CD8-positive, alpha-beta memory T cell (primary cell): ENCODE measurements at regions of chr19 and their contacts with region 1.

Region 1: GRCh38 chr19:48391107-48391986 is at the start of gene KDELR1:
- DNase-seq: peak; percentile 64 to 80 (median 71)
- H3K4me3 ChIP-seq: peak within 1 kb of the TSS; percentile 93
- H3K4me3 Mint-ChIP-seq: peak within 1 kb of the TSS; percentile 91 to 98 (median 92)
- H3K27ac ChIP-seq: peak within 1 kb of the TSS; percentile 88
- H3K27ac Mint-ChIP-seq: peak within 1 kb of the TSS; percentile 82 to 97 (median 94)
- H3K4me1 ChIP-seq: peaks cover 34% of the 10 kb centered on the region
- H3K4me1 Mint-ChIP-seq: peaks cover 26 to 56% (median 32%) of the 10 kb centered on the region in 3 donors
- H3K27me3 ChIP-seq: peaks cover 25% of the 10 kb centered on the region
- H3K27me3 Mint-ChIP-seq: peaks cover 22 to 24% of the 10 kb centered on the region in 2 donors
- total RNA-seq, gene KDELR1: 78.7 to 82.9 TPM

Region 2: DNA sequence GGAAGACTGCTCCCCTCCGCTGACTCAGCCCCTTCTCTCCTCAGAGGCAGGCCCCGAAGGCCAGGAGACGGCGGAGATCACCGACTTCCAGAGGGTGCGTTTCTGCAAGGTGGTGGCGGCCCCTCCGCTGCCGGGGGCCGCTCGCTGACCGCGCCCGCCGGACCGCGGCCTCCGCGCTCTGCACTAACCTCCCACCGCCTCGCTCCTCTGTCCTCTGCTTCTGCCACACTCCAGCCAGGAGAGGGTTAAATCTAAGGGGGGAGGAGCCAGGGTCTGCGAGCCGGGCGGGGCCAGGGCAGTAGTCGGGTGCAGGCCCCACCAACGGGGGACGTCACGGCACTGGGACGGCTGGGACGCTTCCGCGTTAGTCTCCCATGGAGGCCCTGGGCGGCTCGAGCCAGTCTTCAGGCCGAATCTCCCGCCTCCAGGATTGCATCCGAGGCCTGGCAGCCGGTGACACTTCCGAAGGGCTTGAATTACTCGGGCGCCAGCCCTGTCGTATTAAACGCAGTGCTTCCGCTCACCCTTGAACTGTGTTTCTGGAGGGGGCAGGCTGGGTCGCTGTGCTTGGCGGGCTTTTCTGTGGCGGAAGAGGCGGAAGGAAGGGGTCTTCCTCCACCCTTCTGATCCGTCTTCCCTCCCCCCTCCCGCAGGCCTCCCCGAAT is 1117.9 kb before region 1 on chr19:
- CTCF ChIA-PET with region 1: no interaction called
- POLR2A ChIA-PET with region 1: no interaction called
- DNase-seq: peak; percentile 82 to 92 (median 86)
- H3K4me3 ChIP-seq: peak overlapping the region; percentile 93
- H3K4me3 Mint-ChIP-seq: peak overlapping the region; percentile 96 to 99 (median 97)
- H3K27ac ChIP-seq: peak overlapping the region; percentile 97
- H3K27ac Mint-ChIP-seq: peak overlapping the region; percentile 97 to 100 (median 98)
- H3K4me1 ChIP-seq: peaks cover 15% of the 10 kb centered on the region
- H3K4me1 Mint-ChIP-seq: peaks cover 18 to 28% (median 24%) of the 10 kb centered on the region in 3 donors
- H3K27me3 ChIP-seq: no peaks in the 10 kb centered on the region
- H3K27me3 Mint-ChIP-seq: no peaks in the 10 kb centered on the region

Region 3: GRCh38 chr19:48308631-48309586 is 82.4 kb before region 1 on chr19:
- CTCF ChIA-PET with region 1: no interaction called
- POLR2A ChIA-PET with region 1: no interaction called
- DNase-seq: no peak
- H3K4me3 ChIP-seq: no peak overlapping the region
- H3K4me3 Mint-ChIP-seq: no peak overlapping the region
- H3K27ac ChIP-seq: no peak overlapping the region
- H3K27ac Mint-ChIP-seq: no peak overlapping the region
- H3K4me1 ChIP-seq: no peaks in the 10 kb centered on the region
- H3K4me1 Mint-ChIP-seq: no peaks in the 10 kb centered on the region
- H3K27me3 ChIP-seq: no peaks in the 10 kb centered on the region
- H3K27me3 Mint-ChIP-seq: peaks cover 1 to 10% of the 10 kb centered on the region in 2 donors

Region 4: GRCh38 chr19:48333467-48334384 is 57.6 kb before region 1 on chr19:
- CTCF ChIA-PET with region 1: interaction called, 15 read pairs
- POLR2A ChIA-PET with region 1: interaction called, 4 read pairs
- DNase-seq: peak; percentile 89 to 95 (median 91)
- H3K4me3 ChIP-seq: peak overlapping the region; percentile 95
- H3K4me3 Mint-ChIP-seq: peak overlapping the region; percentile 88 to 99 (median 97)
- H3K27ac ChIP-seq: peak overlapping the region; percentile 88
- H3K27ac Mint-ChIP-seq: peak overlapping the region; percentile 93 to 98 (median 96)
- H3K4me1 ChIP-seq: peaks cover 43% of the 10 kb centered on the region
- H3K4me1 Mint-ChIP-seq: peaks cover 43 to 53% (median 49%) of the 10 kb centered on the region in 3 donors
- H3K27me3 ChIP-seq: no peaks in the 10 kb centered on the region
- H3K27me3 Mint-ChIP-seq: no peaks in the 10 kb centered on the region

Region 5: GRCh38 chr19:48363810-48364563 is 27.4 kb before region 1 on chr19 and contains the starts of genes SYNGR4 and TMEM143:
- CTCF ChIA-PET with region 1: interaction called, 21 read pairs
- POLR2A ChIA-PET with region 1: interaction called, 8 read pairs
- DNase-seq: peak; percentile 97 to 100 (median 98)
- H3K4me3 ChIP-seq: peak within 1 kb of the TSS; percentile 99
- H3K4me3 Mint-ChIP-seq: peak within 1 kb of the TSS; percentile 81 to 92 (median 89)
- H3K27ac ChIP-seq: peak within 1 kb of the TSS; percentile 90
- H3K27ac Mint-ChIP-seq: peak within 1 kb of the TSS; percentile 86 to 98 (median 93)
- H3K4me1 ChIP-seq: peaks cover 20% of the 10 kb centered on the region
- H3K4me1 Mint-ChIP-seq: peaks cover 13 to 19% (median 16%) of the 10 kb centered on the region in 3 donors
- H3K27me3 ChIP-seq: no peaks in the 10 kb centered on the region
- H3K27me3 Mint-ChIP-seq: no peaks in the 10 kb centered on the region
- total RNA-seq, gene SYNGR4: not detected
- total RNA-seq, gene TMEM143: 11.4 to 15.8 TPM

Region 6: GRCh38 chr19:48403606-48404005 is 12.3 kb after region 1 on chr19:
- CTCF ChIA-PET with region 1: interaction called, 19 read pairs
- POLR2A ChIA-PET with region 1: no interaction called
- DNase-seq: peak in 4 of 5 donors; percentile 43 to 73 (median 50)
- H3K4me3 ChIP-seq: no peak overlapping the region
- H3K4me3 Mint-ChIP-seq: no peak overlapping the region
- H3K27ac ChIP-seq: no peak overlapping the region
- H3K27ac Mint-ChIP-seq: peak overlapping the region in 6 of 8 donors; percentile 21 to 88 (median 44)
- H3K4me1 ChIP-seq: no peaks in the 10 kb centered on the region
- H3K4me1 Mint-ChIP-seq: peaks cover 15 to 32% (median 18%) of the 10 kb centered on the region in 3 donors
- H3K27me3 ChIP-seq: no peaks in the 10 kb centered on the region
- H3K27me3 Mint-ChIP-seq: peaks cover 11 to 21% of the 10 kb centered on the region in 2 donors

Region 7: GRCh38 chr19:48495396-48495795 is 104.0 kb after region 1 on chr19:
- CTCF ChIA-PET with region 1: no interaction called
- POLR2A ChIA-PET with region 1: no interaction called
- DNase-seq: no peak
- H3K4me3 ChIP-seq: no peak overlapping the region
- H3K4me3 Mint-ChIP-seq: peak overlapping the region in 4 of 7 donors; percentile 36 to 60 (median 52)
- H3K27ac ChIP-seq: no peak overlapping the region
- H3K27ac Mint-ChIP-seq: peak overlapping the region in 3 of 8 donors; percentile 3 to 76 (median 57)
- H3K4me1 ChIP-seq: peaks cover 28% of the 10 kb centered on the region
- H3K4me1 Mint-ChIP-seq: peaks cover 19 to 35% (median 34%) of the 10 kb centered on the region in 3 donors
- H3K27me3 ChIP-seq: peaks cover 3% of the 10 kb centered on the region
- H3K27me3 Mint-ChIP-seq: peaks cover 35 to 37% of the 10 kb centered on the region in 2 donors

Region 8: DNA sequence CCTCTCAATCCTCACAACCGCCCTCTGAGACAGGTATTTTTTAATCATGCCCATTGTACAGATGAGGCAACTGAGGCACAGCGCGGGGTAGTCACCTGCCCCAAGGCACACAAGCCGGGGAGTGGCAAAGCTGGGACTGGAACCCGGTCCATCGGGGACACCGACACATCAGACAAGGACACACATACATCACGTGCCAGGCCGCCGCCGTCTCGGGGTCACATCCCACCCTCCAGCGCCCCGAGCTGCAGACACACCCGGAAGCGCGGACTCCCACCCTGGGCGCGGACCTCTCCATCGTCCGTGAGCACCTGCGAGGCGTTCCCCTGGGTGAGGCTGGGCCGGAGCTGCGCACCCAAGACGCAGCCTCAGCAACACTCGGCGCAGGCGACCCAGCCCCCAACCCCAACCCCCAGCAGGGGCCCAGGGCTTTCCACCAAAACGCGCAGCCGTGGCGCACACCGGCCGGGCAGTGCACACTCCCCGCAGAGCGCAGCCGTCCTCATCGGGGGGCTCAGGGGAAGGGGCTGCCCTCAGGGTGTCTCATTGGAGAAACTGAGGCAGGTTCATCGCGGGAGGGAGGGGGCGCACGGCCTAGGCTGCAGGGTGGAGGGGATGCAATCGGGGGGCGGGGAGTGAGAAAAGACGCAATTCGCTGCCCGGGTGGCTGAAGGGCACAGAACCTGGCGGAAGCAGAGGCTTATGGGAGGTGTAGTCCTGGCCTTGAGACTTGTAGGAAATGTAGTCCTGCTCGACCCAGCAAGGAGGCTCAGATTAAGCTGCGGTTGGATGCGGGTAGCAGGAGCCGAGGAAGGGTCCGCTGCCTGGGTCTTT is 122.2 kb after region 1 on chr19:
- CTCF ChIA-PET with region 1: no interaction called
- POLR2A ChIA-PET with region 1: no interaction called
- DNase-seq: peak; percentile 58 to 85 (median 65)
- H3K4me3 ChIP-seq: peak overlapping the region; percentile 89
- H3K4me3 Mint-ChIP-seq: no peak overlapping the region
- H3K27ac ChIP-seq: peak overlapping the region; percentile 59
- H3K27ac Mint-ChIP-seq: peak overlapping the region in 6 of 8 donors; percentile 70 to 92 (median 90)
- H3K4me1 ChIP-seq: peaks cover 28% of the 10 kb centered on the region
- H3K4me1 Mint-ChIP-seq: peaks cover 13 to 16% (median 15%) of the 10 kb centered on the region in 3 donors
- H3K27me3 ChIP-seq: no peaks in the 10 kb centered on the region
- H3K27me3 Mint-ChIP-seq: no peaks in the 10 kb centered on the region